Colonic mucosa (tissue), 4 donors: ENCODE measurements at regions of chr4 and their contacts with region 1.

Region 1: GRCh38 chr4:2934813-2935761 is 28.1 kb downstream of the NOP14 start:
- DNase-seq: peak; percentile 98
- H3K4me3 ChIP-seq: peak overlapping the region; percentile 94
- H3K27ac ChIP-seq: peak overlapping the region; percentile 79
- H3K4me1 ChIP-seq: peaks cover 17% of the 10 kb centered on the region
- H3K27me3 ChIP-seq: no peaks in the 10 kb centered on the region
- CTCF ChIP-seq: no peak

Region 2: GRCh38 chr4:2761035-2761923 is 173.8 kb before region 1 on chr4:
- intact Hi-C with region 1: loop called (anchors 5 kb)
- DNase-seq: peak; percentile 94
- H3K4me3 ChIP-seq: no peak overlapping the region
- H3K27ac ChIP-seq: peak overlapping the region; percentile 95
- H3K4me1 ChIP-seq: peaks cover 14% of the 10 kb centered on the region
- H3K27me3 ChIP-seq: no peaks in the 10 kb centered on the region
- CTCF ChIP-seq: no peak

Region 3: GRCh38 chr4:2843263-2843940 is 91.7 kb before region 1 on chr4 and contains the start of gene ADD1:
- intact Hi-C with region 1: loop called (anchors 10 kb)
- DNase-seq: peak; percentile 92
- H3K4me3 ChIP-seq: peak within 1 kb of the TSS; percentile 88
- H3K27ac ChIP-seq: peak within 1 kb of the TSS; percentile 90
- H3K4me1 ChIP-seq: peaks cover 3% of the 10 kb centered on the region
- H3K27me3 ChIP-seq: no peaks in the 10 kb centered on the region
- CTCF ChIP-seq: no peak
- total RNA-seq, gene ADD1: 223 to 233 TPM

Region 4: DNA sequence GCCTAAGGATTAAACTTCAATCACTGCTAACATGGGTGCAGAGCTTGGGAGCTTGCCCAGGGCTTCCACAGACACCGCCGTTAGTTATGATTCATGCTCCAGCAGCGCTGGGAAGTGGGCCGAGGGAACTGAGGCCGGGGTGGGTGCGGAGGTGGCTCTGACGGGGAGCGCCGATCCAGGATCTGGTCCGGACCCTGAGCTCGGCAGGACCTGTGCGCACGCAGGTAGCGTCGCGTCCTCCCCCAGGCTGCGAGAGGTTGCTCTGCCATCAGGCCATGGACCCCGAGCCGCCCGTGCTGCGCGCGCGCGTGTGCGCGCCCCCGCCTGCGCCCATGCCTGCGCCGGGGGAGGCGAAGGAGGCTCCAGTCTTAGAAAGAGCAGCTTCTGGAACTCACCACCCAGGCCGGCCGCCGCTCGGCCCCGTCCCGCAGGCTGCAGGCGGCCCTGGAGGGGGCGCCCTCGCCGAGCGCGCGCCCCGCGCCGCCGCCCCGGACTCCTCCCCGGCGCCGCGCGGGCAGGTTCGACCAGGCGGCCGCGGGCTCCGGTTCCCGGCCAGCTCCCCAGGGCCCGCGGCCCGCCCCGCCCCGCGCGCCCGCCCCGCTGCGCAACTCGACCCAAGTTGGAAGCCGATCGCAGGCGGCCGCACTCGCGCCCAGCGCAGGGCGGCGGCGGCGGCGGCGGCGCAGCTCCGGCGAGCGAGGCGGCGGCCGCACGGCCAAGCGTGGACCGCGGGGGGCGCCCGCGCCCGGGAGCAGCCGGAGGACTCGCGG is 830.4 kb after region 1 on chr4:
- intact Hi-C with region 1: no loop called
- DNase-seq: peak; percentile 26
- H3K4me3 ChIP-seq: no peak overlapping the region
- H3K27ac ChIP-seq: no peak overlapping the region
- H3K4me1 ChIP-seq: no peaks in the 10 kb centered on the region
- H3K27me3 ChIP-seq: peaks cover 25% of the 10 kb centered on the region
- CTCF ChIP-seq: no peak